ENCODE measurements at regions of chr17 and their contacts with region 1.

Region 1: DNA sequence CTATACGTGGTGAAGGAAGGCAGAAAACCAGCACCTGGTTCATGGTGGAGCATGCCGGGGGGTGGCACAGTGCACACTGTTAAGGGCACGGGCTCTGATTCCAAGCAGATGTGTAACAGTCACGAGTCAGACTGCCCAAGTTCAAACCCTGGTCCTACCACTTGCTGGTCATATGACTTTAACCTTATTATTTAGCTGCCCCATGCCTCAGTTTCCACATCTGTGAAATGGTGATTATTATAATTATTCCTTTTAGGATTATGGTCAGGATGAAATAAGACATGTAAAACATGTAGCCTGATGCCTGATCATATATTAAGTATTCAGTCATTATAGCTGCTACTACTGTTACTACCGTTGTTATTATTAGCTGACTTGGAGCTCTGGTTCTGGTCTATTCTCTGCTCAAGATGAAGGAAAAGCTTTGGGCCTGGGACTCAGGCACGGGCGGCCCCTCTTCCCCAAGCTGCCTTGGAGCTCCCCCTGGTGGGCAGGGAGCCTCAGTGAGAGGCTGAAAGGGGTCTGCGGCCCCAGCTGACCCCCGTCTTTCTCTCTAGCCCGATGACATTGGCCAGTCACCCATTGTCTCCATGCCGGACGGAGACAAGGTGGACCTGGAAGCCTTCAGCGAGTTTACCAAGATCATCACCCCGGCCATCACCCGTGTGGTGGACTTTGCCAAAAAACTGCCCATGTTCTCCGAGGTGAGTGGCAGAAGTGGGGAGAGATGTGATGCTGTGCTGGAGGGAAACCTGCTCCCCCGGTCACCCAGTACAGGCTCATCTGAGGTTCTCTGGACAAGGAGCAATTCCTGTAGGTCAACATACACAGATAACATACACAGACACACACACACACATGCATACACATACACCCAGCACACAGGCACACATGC is 14.0 kb downstream of the NR1D1 start:
- DNase-seq: peak; percentile 61
- H3K4me3 Mint-ChIP-seq: no peak overlapping the region
- H3K27ac Mint-ChIP-seq: no peak overlapping the region
- H3K4me1 Mint-ChIP-seq: no peaks in the 10 kb centered on the region
- H3K27me3 Mint-ChIP-seq: no peaks in the 10 kb centered on the region
- CTCF ChIP-seq: peak; percentile 81

Region 2: GRCh38 chr17:40041196-40041595 is 45.2 kb before region 1 on chr17:
- CTCF ChIA-PET with region 1: no interaction called
- POLR2A ChIA-PET with region 1: no interaction called
- intact Hi-C with region 1: no loop called
- DNase-seq: no peak
- H3K4me3 Mint-ChIP-seq: no peak overlapping the region
- H3K27ac Mint-ChIP-seq: peak overlapping the region; percentile 11
- H3K4me1 Mint-ChIP-seq: no peaks in the 10 kb centered on the region
- H3K27me3 Mint-ChIP-seq: no peaks in the 10 kb centered on the region
- CTCF ChIP-seq: no peak

Region 3: DNA sequence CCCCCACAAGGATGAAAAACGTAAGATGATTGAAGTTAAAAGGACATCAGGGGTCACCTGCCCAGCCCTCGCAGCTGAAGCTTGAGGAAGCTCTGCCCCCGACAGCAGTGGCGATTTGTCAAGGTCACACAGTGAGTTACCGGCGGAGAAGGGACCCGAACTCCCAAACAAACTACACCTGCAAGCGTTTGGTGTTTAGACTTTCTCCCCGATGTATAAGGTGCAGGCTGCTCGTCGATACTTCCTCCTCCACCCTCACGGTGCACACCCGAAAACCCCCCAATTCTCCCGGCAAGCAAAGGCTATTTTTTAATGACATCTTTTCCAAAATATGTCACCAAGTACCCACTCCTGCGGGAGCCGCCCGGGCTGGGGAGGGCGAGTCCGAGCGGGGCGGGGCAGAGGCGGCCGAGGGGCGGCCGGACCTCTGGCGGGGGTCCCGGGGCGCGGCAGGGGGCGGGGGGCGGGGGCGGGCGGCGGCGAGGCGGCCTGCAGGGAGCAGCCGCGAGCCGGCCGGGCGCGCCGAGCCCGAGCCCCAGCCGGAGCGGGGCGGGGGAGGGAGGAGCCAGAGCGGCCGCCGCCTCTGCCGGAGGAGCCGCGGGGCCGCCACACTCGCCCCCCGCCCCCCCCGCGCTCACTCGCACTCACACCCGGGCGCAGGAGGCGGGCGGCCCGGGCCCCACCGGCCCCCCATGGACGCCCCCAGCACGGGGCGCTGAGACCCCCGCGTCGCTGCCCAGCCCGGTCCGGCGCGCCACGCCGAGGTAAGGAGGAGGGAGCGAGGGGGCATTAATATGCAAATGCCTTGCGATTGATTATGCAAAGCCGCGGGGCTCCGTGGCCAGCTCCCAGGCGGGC is 23.8 kb before region 1 on chr17 and contains the start of gene THRA:
- CTCF ChIA-PET with region 1: interaction called, 25 read pairs
- POLR2A ChIA-PET with region 1: interaction called, 6 read pairs
- intact Hi-C with region 1: loop called (anchors 2 kb)
- DNase-seq: peak; percentile 46
- H3K4me3 Mint-ChIP-seq: peak within 1 kb of the TSS; percentile 89
- H3K27ac Mint-ChIP-seq: peak within 1 kb of the TSS; percentile 39
- H3K4me1 Mint-ChIP-seq: peaks cover 33% of the 10 kb centered on the region
- H3K27me3 Mint-ChIP-seq: no peaks in the 10 kb centered on the region
- CTCF ChIP-seq: peak; percentile 22
- total RNA-seq, gene THRA: 5.5 and 6.4 TPM in 2 replicates

Region 4: GRCh38 chr17:40075201-40075941 is 11.0 kb before region 1 on chr17:
- CTCF ChIA-PET with region 1: interaction called, 71 read pairs
- POLR2A ChIA-PET with region 1: interaction called, 3 read pairs
- intact Hi-C with region 1: no loop called
- DNase-seq: peak; percentile 78
- H3K4me3 Mint-ChIP-seq: peak overlapping the region; percentile 65
- H3K27ac Mint-ChIP-seq: peak overlapping the region; percentile 36
- H3K4me1 Mint-ChIP-seq: peaks cover 62% of the 10 kb centered on the region
- H3K27me3 Mint-ChIP-seq: no peaks in the 10 kb centered on the region
- CTCF ChIP-seq: peak; percentile 89

Region 5: DNA sequence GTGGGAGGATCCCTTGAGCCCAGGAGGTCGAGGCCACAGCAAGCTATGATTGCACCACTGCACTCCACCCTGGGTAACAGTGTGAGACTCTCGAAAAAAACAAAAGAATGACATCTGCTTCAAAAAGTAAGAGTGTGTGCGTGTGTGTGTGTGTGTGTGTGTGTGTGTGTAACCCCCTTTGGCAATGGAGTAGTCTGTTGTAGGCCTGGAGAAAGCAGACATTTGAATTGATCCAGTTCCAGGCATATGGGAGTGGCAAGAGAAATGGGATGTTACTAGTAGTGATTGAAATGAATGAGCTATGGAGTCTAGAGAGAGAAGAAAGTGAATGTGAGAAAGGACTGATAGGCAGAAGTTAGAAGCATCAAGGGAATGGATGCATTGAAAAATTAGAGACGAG is 63.9 kb after region 1 on chr17:
- CTCF ChIA-PET with region 1: no interaction called
- POLR2A ChIA-PET with region 1: no interaction called
- intact Hi-C with region 1: no loop called
- DNase-seq: no peak
- H3K4me3 Mint-ChIP-seq: no peak overlapping the region
- H3K27ac Mint-ChIP-seq: no peak overlapping the region
- H3K4me1 Mint-ChIP-seq: peaks cover 26% of the 10 kb centered on the region
- H3K27me3 Mint-ChIP-seq: no peaks in the 10 kb centered on the region
- CTCF ChIP-seq: no peak

Region 6: GRCh38 chr17:40209404-40210093 is 123.2 kb after region 1 on chr17:
- CTCF ChIA-PET with region 1: no interaction called
- POLR2A ChIA-PET with region 1: no interaction called
- intact Hi-C with region 1: no loop called
- DNase-seq: no peak
- H3K4me3 Mint-ChIP-seq: no peak overlapping the region
- H3K27ac Mint-ChIP-seq: no peak overlapping the region
- H3K4me1 Mint-ChIP-seq: no peaks in the 10 kb centered on the region
- H3K27me3 Mint-ChIP-seq: no peaks in the 10 kb centered on the region
- CTCF ChIP-seq: no peak